GM12878 (cell line): ENCODE measurements at regions of chr4 and their contacts with region 1.

Region 1: GRCh38 chr4:185576962-185577950 is 41.9 kb upstream of the PDLIM3 start:
- DNase-seq: no peak
- ATAC-seq: no peak
- H3K4me3 ChIP-seq: no peak overlapping the region
- H3K27ac ChIP-seq: no peak overlapping the region
- H3K4me1 ChIP-seq: no peaks in the 10 kb centered on the region
- H3K27me3 ChIP-seq: no peaks in the 10 kb centered on the region; a peak in 1 of 4 replicates
- CTCF ChIP-seq: no peak
- EP300 ChIP-seq: no peak
- POLR2A ChIP-seq: no peak
- RAD21 ChIP-seq: no peak

Region 2: GRCh38 chr4:185256446-185256845 is 320.8 kb before region 1 on chr4:
- CTCF ChIA-PET with region 1: no interaction called
- POLR2A ChIA-PET with region 1: no interaction called
- RAD21 ChIA-PET with region 1: no interaction called
- SMC1A ChIA-PET with region 1: no interaction called
- in situ Hi-C with region 1: no loop called
- intact Hi-C with region 1: no loop called
- DNase-seq: no peak
- ATAC-seq: no peak
- H3K4me3 ChIP-seq: no peak overlapping the region
- H3K27ac ChIP-seq: peak overlapping the region; percentile 38; the same call in 1 of the 2 replicates
- H3K4me1 ChIP-seq: peaks cover 34% of the 10 kb centered on the region
- H3K27me3 ChIP-seq: no peaks in the 10 kb centered on the region
- CTCF ChIP-seq: no peak
- EP300 ChIP-seq: no peak
- POLR2A ChIP-seq: no peak
- RAD21 ChIP-seq: no peak

Region 3: GRCh38 chr4:185504098-185505047 is 72.9 kb before region 1 on chr4:
- CTCF ChIA-PET with region 1: no interaction called
- POLR2A ChIA-PET with region 1: no interaction called
- RAD21 ChIA-PET with region 1: no interaction called
- SMC1A ChIA-PET with region 1: no interaction called
- in situ Hi-C with region 1: no loop called
- intact Hi-C with region 1: loop called (anchors 5 kb)
- DNase-seq: no peak
- ATAC-seq: no peak
- H3K4me3 ChIP-seq: no peak overlapping the region
- H3K27ac ChIP-seq: no peak overlapping the region
- H3K4me1 ChIP-seq: no peaks in the 10 kb centered on the region
- H3K27me3 ChIP-seq: no peaks in the 10 kb centered on the region
- CTCF ChIP-seq: no peak
- EP300 ChIP-seq: no peak
- POLR2A ChIP-seq: no peak
- RAD21 ChIP-seq: no peak